ENCODE measurements at regions of chr10 and their contacts with region 1.

Region 1: GRCh38 chr10:72126184-72126871 is 38.0 kb upstream of the SPOCK2 start:
- DNase-seq: no peak
- ATAC-seq: no peak
- H3K4me3 Mint-ChIP-seq: no peak overlapping the region
- H3K27ac Mint-ChIP-seq: no peak overlapping the region
- H3K4me1 Mint-ChIP-seq: peaks cover 20% of the 10 kb centered on the region
- H3K27me3 Mint-ChIP-seq: no peaks in the 10 kb centered on the region

Region 2: GRCh38 chr10:72088889-72089575 is 37.3 kb before region 1 on chr10:
- CTCF ChIA-PET with region 1: interaction called, 13 read pairs
- DNase-seq: peak; percentile 72
- ATAC-seq: peak; percentile 41
- H3K4me3 Mint-ChIP-seq: peak overlapping the region; percentile 94
- H3K27ac Mint-ChIP-seq: peak overlapping the region; percentile 98
- H3K4me1 Mint-ChIP-seq: peaks cover 50% of the 10 kb centered on the region
- H3K27me3 Mint-ChIP-seq: no peaks in the 10 kb centered on the region

Region 3: GRCh38 chr10:72114706-72115450 is 11.4 kb before region 1 on chr10:
- CTCF ChIA-PET with region 1: interaction called, 10 read pairs
- DNase-seq: no peak
- ATAC-seq: no peak
- H3K4me3 Mint-ChIP-seq: no peak overlapping the region
- H3K27ac Mint-ChIP-seq: no peak overlapping the region
- H3K4me1 Mint-ChIP-seq: peaks cover 4% of the 10 kb centered on the region
- H3K27me3 Mint-ChIP-seq: no peaks in the 10 kb centered on the region

Region 4: GRCh38 chr10:72140174-72140573 is 13.8 kb after region 1 on chr10:
- CTCF ChIA-PET with region 1: interaction called, 10 read pairs
- DNase-seq: no peak
- ATAC-seq: no peak
- H3K4me3 Mint-ChIP-seq: no peak overlapping the region
- H3K27ac Mint-ChIP-seq: no peak overlapping the region
- H3K4me1 Mint-ChIP-seq: peaks cover 8% of the 10 kb centered on the region
- H3K27me3 Mint-ChIP-seq: no peaks in the 10 kb centered on the region

Region 5: GRCh38 chr10:72344932-72345331 is 218.6 kb after region 1 on chr10:
- CTCF ChIA-PET with region 1: interaction called, 12 read pairs
- DNase-seq: peak; percentile 58
- ATAC-seq: peak; percentile 46
- H3K4me3 Mint-ChIP-seq: no peak overlapping the region
- H3K27ac Mint-ChIP-seq: peak overlapping the region; percentile 59
- H3K4me1 Mint-ChIP-seq: peaks cover 28% of the 10 kb centered on the region
- H3K27me3 Mint-ChIP-seq: no peaks in the 10 kb centered on the region

Measured in activated CD8-positive, alpha-beta memory T cell treated with anti-CD3 and anti-CD28 coated beads, Interleukin-2, amount 10 ng/mL, durations not matched to agents 7 days and 5 days (primary cell).